ENCODE measurements at regions of chr6 and their contacts with region 1.

Region 1: DNA sequence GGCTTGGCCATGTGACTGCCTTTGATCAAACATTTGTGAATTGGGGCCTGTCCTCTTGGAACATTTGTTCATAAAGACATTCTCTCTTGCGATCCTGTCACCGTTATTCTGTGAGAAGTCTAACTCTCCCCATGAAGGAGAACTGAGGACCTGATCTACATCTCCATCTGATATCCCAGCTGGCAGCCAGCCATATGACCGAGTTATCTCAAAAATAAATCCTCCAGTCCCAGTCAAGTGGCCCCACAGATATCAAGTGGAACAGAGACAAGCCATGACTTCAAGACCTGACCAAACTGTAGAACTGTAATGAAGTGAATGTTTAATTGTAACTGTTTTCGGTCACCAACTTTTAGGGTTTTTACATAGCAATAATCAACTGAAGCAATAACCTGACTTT is 25.7 kb downstream of the SNX3 start:
- DNase-seq: no peak
- H3K4me3 ChIP-seq: no peak overlapping the region
- H3K27me3 ChIP-seq: no peaks in the 10 kb centered on the region
- CTCF ChIP-seq: no peak

Region 2: GRCh38 chr6:108222504-108222903 is 12.6 kb before region 1 on chr6:
- CTCF ChIA-PET with region 1: interaction called, 3 read pairs
- POLR2A ChIA-PET with region 1: interaction called, 11 read pairs
- DNase-seq: no peak
- H3K4me3 ChIP-seq: no peak overlapping the region
- H3K27me3 ChIP-seq: no peaks in the 10 kb centered on the region
- CTCF ChIP-seq: no peak

Measured in BJ (cell line).